Activated CD4-positive, alpha-beta T cell treated with anti-CD3 and anti-CD28 coated beads for 36 hours (primary cell): ENCODE measurements at regions of chr4 and their contacts with region 1.

Region 1: DNA sequence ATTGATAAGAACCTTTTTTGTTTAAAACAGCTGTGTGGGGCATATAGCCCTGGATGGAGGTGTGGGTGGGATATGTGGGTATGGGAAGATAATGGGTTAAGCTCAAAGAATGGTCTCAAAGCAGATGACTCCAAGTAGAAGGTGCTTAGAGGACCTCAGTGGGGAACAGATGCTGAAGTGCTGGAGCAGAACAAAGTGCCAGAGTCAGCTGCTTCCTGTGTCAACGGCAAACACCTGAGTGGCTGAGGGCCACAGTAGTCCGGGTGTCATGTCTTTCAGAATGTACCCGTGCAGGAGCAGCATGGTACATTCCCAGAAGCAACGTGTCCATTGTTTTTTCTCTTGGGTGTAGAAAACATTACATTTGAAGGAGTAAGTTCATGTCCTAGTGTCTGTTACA is 210.6 kb downstream of the CCNG2 start:
- DNase-seq: no peak
- ATAC-seq: no peak
- H3K4me3 Mint-ChIP-seq: no peak overlapping the region
- H3K27ac Mint-ChIP-seq: no peak overlapping the region
- H3K4me1 Mint-ChIP-seq: no peaks in the 10 kb centered on the region
- H3K27me3 Mint-ChIP-seq: no peaks in the 10 kb centered on the region

Region 2: DNA sequence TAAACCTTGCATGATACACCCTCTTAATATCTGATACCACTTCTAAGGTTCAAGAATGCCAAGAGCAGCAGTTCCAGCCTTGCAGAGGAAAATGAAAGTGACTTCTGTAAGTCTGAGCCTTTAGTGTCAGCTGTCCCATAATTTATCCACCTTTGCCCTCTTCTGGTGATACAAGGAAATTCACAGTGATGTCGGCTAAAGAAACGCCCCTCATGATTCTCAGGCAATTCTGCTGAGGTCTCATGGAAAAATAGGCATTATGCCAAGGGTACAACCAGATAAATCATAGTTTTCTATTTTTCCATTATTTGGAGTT is 65.7 kb after region 1 on chr4:
- CTCF ChIA-PET with region 1: interaction called, 11 read pairs
- POLR2A ChIA-PET with region 1: no interaction called
- intact Hi-C with region 1: loop called in 1 of 2 experiments (anchors 5 kb)
- DNase-seq: peak; percentile 13
- ATAC-seq: peak; percentile 89
- H3K4me3 Mint-ChIP-seq: no peak overlapping the region
- H3K27ac Mint-ChIP-seq: no peak overlapping the region
- H3K4me1 Mint-ChIP-seq: peaks cover 9% of the 10 kb centered on the region
- H3K27me3 Mint-ChIP-seq: no peaks in the 10 kb centered on the region